ENCODE measurements at regions of chr4 and their contacts with region 1.

Region 1: GRCh38 chr4:130563185-130563888 is 1467.4 kb downstream of the C4orf33 start:
- DNase-seq: peak; percentile 57 to 66
- H3K4me3 ChIP-seq: no peak overlapping the region; a peak in 1 of 8 replicates
- H3K27ac ChIP-seq: no peak overlapping the region
- H3K4me1 ChIP-seq: peaks cover 0 to 7% (median 0%) of the 10 kb centered on the region in 4 experiments; a peak in 3 of 7 replicates
- H3K27me3 ChIP-seq: no peaks in the 10 kb centered on the region
- CTCF ChIP-seq: peak; percentile 75 to 88 (median 78)
- EP300 ChIP-seq: no peak
- POLR2A ChIP-seq: no peak
- RAD21 ChIP-seq: peak; percentile 96

Region 2: GRCh38 chr4:130288576-130288975 is 274.8 kb before region 1 on chr4:
- CTCF ChIA-PET with region 1: no interaction called
- POLR2A ChIA-PET with region 1: no interaction called
- DNase-seq: no peak
- H3K4me3 ChIP-seq: no peak overlapping the region
- H3K27ac ChIP-seq: no peak overlapping the region
- H3K4me1 ChIP-seq: peaks cover 0 to 2% (median 0%) of the 10 kb centered on the region in 4 experiments; a peak in 1 of 7 replicates
- H3K27me3 ChIP-seq: no peaks in the 10 kb centered on the region
- CTCF ChIP-seq: no peak
- EP300 ChIP-seq: no peak
- POLR2A ChIP-seq: no peak
- RAD21 ChIP-seq: no peak

Region 3: DNA sequence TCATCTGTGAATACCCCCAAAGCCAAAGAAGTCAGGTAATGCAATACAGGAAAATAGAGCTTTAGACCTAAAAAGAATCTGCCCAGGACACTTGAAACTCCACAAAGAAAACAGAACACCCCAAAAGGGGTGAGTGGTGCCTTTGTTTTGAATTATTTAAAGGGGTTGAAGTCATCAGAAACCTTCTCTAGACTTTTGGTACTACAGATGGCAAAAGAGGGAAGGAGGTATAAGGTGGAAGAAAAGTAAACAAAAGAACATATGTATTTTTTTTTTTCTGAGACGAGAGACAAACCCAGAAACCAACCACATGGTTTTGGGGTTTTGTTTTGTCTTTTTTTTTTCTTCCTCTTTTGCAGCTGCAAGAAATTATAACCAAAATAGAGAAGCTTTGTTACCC is 10.4 kb after region 1 on chr4:
- CTCF ChIA-PET with region 1: interaction called, 12 read pairs
- POLR2A ChIA-PET with region 1: no interaction called
- DNase-seq: no peak
- H3K4me3 ChIP-seq: 0 out of 8 replicates have a peak overlapping the region, but pooled peaks of 1 of the 4 experiments have one; percentile 7
- H3K27ac ChIP-seq: 0 out of 2 replicates have a peak overlapping the region, but pooled peaks have one; percentile 3
- H3K4me1 ChIP-seq: peaks cover 0 to 5% (median 0%) of the 10 kb centered on the region in 4 experiments; a peak in 3 of 7 replicates
- H3K27me3 ChIP-seq: no peaks in the 10 kb centered on the region
- CTCF ChIP-seq: no peak
- EP300 ChIP-seq: no peak
- POLR2A ChIP-seq: no peak
- RAD21 ChIP-seq: no peak

Region 4: DNA sequence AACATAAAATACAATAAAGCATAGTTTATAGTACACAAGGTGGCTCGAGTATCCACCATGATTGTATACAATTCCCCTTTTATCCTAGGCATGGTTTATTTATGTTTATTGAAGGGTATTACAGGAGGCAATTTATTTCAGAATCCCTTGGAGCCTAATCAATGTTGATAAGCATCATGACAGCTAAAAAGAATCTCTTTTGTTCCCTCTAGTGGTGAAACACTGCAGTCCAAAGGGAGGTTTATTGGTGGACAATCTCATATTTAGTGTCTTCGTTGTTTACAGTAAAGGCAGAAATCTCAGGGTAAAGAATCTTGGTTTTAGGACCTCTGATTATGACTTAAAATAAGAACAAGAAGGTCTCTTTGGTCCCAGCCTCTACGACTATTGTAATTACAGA is 245.2 kb after region 1 on chr4:
- CTCF ChIA-PET with region 1: interaction called, 15 read pairs
- POLR2A ChIA-PET with region 1: no interaction called
- DNase-seq: no peak
- H3K4me3 ChIP-seq: no peak overlapping the region
- H3K27ac ChIP-seq: no peak overlapping the region
- H3K4me1 ChIP-seq: no peaks in the 10 kb centered on the region
- H3K27me3 ChIP-seq: peaks cover 0 to 1% (median 0%) of the 10 kb centered on the region in 4 experiments; a peak in 1 of 7 replicates
- CTCF ChIP-seq: peak in 2 of 3 experiments; percentile 24 to 64; a peak in 2 of 4 replicates
- EP300 ChIP-seq: no peak
- POLR2A ChIP-seq: no peak
- RAD21 ChIP-seq: peak; percentile 60 to 65

Region 5: DNA sequence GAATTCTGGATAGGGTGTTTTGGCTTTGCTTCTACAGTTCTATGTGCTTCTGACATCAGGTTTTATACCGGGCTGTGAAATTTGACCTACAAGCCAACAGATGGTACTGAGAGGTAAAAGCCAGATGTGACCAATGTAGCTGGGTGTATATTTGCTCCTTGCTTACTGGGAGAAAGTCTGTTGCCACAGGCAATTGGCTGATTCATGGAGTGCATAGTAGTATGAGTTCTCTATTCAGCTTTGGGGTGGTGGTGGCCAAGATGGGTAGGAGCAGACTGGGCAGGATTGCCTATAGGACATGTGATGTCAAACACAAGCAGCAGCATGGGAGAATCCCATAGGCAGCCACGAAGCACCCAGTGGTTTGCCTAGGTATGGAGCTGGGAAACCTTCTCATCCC is 359.6 kb after region 1 on chr4:
- CTCF ChIA-PET with region 1: no interaction called
- POLR2A ChIA-PET with region 1: no interaction called
- DNase-seq: no peak
- H3K4me3 ChIP-seq: no peak overlapping the region
- H3K27ac ChIP-seq: no peak overlapping the region
- H3K4me1 ChIP-seq: no peaks in the 10 kb centered on the region
- H3K27me3 ChIP-seq: peaks cover 0 to 1% (median 0%) of the 10 kb centered on the region in 4 experiments; a peak in 1 of 7 replicates
- CTCF ChIP-seq: no peak
- EP300 ChIP-seq: no peak
- POLR2A ChIP-seq: no peak
- RAD21 ChIP-seq: no peak

Measured in H1 (cell line).